ENCODE measurements at regions of chr3 and their contacts with region 1.

Region 1: DNA sequence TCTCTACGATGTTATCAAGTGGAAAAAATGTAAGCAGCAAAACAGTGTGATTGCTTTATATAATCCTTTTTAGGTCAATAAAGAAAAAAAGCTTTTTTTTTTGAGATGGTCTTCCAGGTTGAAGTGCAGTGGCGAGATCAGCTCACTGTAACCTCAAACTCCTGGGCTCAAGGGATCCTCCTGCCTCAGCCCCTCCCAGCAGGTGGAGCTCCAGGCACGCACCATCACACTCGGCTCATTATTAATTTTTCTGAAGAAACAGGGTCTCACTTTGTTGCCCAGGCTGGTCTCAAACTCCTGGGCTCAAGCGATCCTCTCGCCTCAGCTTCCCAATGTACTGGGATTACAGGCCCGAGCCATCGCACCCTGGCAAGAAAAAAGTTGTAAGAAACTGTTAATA is 17.3 kb downstream of the RNF168 start:
- DNase-seq: peak; percentile 27
- H3K4me3 Mint-ChIP-seq: no peak overlapping the region
- H3K27ac Mint-ChIP-seq: no peak overlapping the region
- H3K4me1 Mint-ChIP-seq: peaks cover 6% of the 10 kb centered on the region
- H3K27me3 Mint-ChIP-seq: no peaks in the 10 kb centered on the region

Region 2: DNA sequence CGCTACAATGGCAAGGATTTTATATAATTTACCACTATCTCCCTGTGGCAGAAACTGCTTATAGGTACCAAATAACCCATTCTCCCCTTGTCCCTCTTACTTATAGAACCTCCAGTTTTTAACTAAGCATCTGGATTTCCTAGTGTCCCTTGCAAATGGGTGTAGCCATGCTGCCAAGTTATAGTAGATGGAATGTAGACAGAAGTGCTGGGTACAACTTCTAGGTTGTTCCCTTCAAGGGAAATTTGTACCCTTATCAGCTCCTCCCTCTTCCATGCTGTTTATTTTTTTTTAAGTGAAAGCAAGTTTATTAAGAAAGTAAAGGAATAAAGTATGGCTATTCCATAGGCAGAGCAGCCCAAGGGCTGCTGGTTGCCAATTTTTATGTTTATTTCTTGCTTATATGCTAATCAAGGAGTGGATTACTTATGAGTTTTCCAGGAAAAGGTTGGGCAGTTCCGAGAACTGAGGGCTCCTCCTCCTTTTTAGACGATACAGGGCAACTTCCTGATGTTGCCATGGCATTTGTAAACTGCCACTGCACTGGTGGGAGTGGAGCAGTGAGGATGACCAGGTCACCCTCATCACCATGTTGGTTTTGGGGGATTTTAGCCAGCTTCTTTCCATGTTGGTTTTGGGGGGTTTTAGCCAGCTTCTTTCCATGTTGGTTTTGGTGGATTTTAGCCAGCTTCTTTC is 108.0 kb before region 1 on chr3:
- CTCF ChIA-PET with region 1: no interaction called
- POLR2A ChIA-PET with region 1: no interaction called
- DNase-seq: peak; percentile 39
- H3K4me3 Mint-ChIP-seq: no peak overlapping the region
- H3K27ac Mint-ChIP-seq: no peak overlapping the region
- H3K4me1 Mint-ChIP-seq: peaks cover 7% of the 10 kb centered on the region
- H3K27me3 Mint-ChIP-seq: no peaks in the 10 kb centered on the region

Region 3: DNA sequence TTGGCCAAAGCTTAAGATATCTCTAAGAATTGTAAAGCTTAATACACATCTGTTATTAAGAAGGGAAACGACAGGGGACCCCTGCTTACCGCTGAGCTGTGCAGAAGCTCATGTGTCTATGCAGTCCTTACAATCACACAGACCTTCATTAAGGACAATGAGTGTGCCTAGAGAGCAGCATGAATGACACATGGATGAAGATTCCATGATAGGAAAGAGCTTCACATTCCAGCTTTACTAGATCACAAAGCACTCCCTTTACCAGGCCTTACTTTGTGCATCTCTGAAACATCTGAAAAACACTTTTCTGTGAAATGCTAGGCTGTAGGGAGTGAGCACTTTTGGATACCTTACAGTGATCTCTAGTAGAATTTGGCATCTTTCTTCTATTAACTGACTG is 14.7 kb before region 1 on chr3:
- CTCF ChIA-PET with region 1: interaction called, 13 read pairs
- POLR2A ChIA-PET with region 1: interaction called, 5 read pairs
- DNase-seq: no peak
- H3K4me3 Mint-ChIP-seq: no peak overlapping the region
- H3K27ac Mint-ChIP-seq: no peak overlapping the region
- H3K4me1 Mint-ChIP-seq: peaks cover 22% of the 10 kb centered on the region
- H3K27me3 Mint-ChIP-seq: no peaks in the 10 kb centered on the region

Region 4: GRCh38 chr3:196518966-196519717 is 32.9 kb after region 1 on chr3:
- CTCF ChIA-PET with region 1: interaction called, 10 read pairs
- POLR2A ChIA-PET with region 1: no interaction called
- DNase-seq: peak; percentile 71
- H3K4me3 Mint-ChIP-seq: no peak overlapping the region
- H3K27ac Mint-ChIP-seq: no peak overlapping the region
- H3K4me1 Mint-ChIP-seq: peaks cover 2% of the 10 kb centered on the region
- H3K27me3 Mint-ChIP-seq: peaks cover 2% of the 10 kb centered on the region

Region 5: GRCh38 chr3:196585044-196585757 is 98.9 kb after region 1 on chr3:
- CTCF ChIA-PET with region 1: no interaction called
- POLR2A ChIA-PET with region 1: no interaction called
- DNase-seq: no peak
- H3K4me3 Mint-ChIP-seq: no peak overlapping the region
- H3K27ac Mint-ChIP-seq: no peak overlapping the region
- H3K4me1 Mint-ChIP-seq: peaks cover 17% of the 10 kb centered on the region
- H3K27me3 Mint-ChIP-seq: no peaks in the 10 kb centered on the region